ENCODE measurements at regions of chrX and their contacts with region 1.

Region 1: DNA sequence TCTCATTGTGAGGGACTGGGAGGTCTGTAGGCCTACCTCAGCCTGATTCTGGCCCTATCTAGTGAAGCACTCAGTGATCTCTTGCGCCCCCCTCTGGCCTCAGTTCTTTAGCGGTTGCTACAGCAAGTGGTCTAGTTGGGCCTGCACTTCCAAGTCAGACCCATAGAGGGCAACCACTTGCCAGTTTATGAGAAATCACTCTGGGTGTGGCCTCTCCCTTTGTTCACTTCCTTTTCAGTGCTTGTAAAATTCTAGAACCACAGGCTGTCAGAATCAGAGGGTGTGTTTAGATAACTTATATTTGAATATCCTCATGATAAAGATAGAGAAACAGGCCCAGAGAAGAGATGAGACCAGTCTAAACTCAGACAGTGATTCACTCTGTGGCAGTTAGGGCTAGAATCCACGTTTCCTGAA is 60.9 kb upstream of the LAS1L start:
- DNase-seq: peak; percentile 83
- H3K4me3 Mint-ChIP-seq: peak overlapping the region; percentile 65
- H3K27ac Mint-ChIP-seq: peak overlapping the region; percentile 96
- H3K4me1 Mint-ChIP-seq: peaks cover 54% of the 10 kb centered on the region
- H3K27me3 Mint-ChIP-seq: no peaks in the 10 kb centered on the region

Region 2: GRCh38 chrX:65607070-65607742 is 11.7 kb after region 1 on chrX:
- intact Hi-C with region 1: loop called (anchors 1 kb)
- DNase-seq: no peak
- H3K4me3 Mint-ChIP-seq: peak overlapping the region; percentile 24
- H3K27ac Mint-ChIP-seq: peak overlapping the region; percentile 86
- H3K4me1 Mint-ChIP-seq: peaks cover 54% of the 10 kb centered on the region
- H3K27me3 Mint-ChIP-seq: no peaks in the 10 kb centered on the region

Region 3: DNA sequence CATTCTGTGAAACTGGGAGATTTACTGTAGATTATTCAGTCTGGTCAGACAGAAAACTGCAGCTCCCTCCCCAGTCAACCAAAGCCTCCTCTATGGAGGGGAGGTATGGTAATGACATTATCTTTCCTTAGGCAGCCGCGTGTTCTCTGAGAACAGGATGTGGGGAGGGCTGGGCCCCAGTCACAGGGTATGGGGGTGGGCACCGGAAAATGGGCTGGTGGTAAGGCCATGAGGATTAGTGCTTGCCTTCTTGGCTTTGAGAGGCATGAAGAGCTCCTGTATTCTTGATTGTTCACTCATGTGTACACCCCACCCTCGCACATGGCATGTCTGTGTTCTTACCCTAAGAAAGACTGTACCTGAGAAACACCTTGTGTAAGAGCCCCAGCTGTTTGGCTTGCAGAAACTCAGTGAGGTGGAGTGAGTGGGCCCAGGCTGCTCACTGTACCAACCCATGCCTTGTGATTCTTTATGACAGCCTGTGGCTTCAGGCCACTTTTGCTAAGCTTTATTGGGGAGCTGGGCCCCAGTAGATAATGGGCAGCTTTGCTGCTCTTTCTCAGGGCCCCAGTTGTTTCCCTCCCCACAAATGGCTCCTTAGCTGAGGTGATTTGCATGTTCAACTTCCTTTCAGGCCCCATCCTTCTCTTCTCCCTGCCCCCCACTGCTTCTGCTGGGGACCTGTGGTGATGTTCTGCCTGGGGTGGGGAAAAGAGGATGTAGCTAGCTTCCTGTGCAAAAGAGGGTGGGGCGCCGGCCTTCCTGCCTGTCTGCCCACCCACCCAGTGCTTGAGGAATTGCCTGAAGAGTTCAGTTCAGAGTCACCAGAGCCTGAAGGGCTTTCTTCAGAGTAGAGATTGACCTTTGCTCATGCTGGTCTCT is 102.7 kb after region 1 on chrX:
- intact Hi-C with region 1: loop called (anchors 1 kb)
- DNase-seq: peak; percentile 65
- H3K4me3 Mint-ChIP-seq: peak overlapping the region; percentile 77
- H3K27ac Mint-ChIP-seq: peak overlapping the region; percentile 98
- H3K4me1 Mint-ChIP-seq: peaks cover 90% of the 10 kb centered on the region
- H3K27me3 Mint-ChIP-seq: no peaks in the 10 kb centered on the region

Region 4: GRCh38 chrX:65750674-65751469 is 155.4 kb after region 1 on chrX:
- intact Hi-C with region 1: loop called (anchors 1 kb)
- DNase-seq: peak; percentile 43
- H3K4me3 Mint-ChIP-seq: peak overlapping the region; percentile 56
- H3K27ac Mint-ChIP-seq: peak overlapping the region; percentile 55
- H3K4me1 Mint-ChIP-seq: peaks cover 60% of the 10 kb centered on the region
- H3K27me3 Mint-ChIP-seq: no peaks in the 10 kb centered on the region

Region 5: GRCh38 chrX:65926095-65927019 is 330.9 kb after region 1 on chrX:
- intact Hi-C with region 1: loop called (anchors 5 kb)
- DNase-seq: peak; percentile 39
- H3K4me3 Mint-ChIP-seq: peak overlapping the region; percentile 59
- H3K27ac Mint-ChIP-seq: peak overlapping the region; percentile 89
- H3K4me1 Mint-ChIP-seq: peaks cover 50% of the 10 kb centered on the region
- H3K27me3 Mint-ChIP-seq: no peaks in the 10 kb centered on the region

Region 6: GRCh38 chrX:66728818-66729271 is 1133.4 kb after region 1 on chrX:
- intact Hi-C with region 1: loop called (anchors 5 kb)
- DNase-seq: peak; percentile 19
- H3K4me3 Mint-ChIP-seq: peak overlapping the region; percentile 91
- H3K27ac Mint-ChIP-seq: peak overlapping the region; percentile 89
- H3K4me1 Mint-ChIP-seq: no peaks in the 10 kb centered on the region
- H3K27me3 Mint-ChIP-seq: peaks cover 2% of the 10 kb centered on the region

Measured in activated T-helper 1 cell treated with anti-CD3 and anti-CD28 coated beads, Interleukin-12 subunit alpha, Interleukin-12 subunit beta, Interleukin-2, Interleukin-4 antibody, amounts not matched to agents 30 ng/mL and 10 ng/mL and 1 ng/mL, durations not matched to agents 14 hours and 24 hours and 36 hours (primary cell).